A549 (cell line): ENCODE measurements at regions of chr9 and their contacts with region 1.

Region 1: DNA sequence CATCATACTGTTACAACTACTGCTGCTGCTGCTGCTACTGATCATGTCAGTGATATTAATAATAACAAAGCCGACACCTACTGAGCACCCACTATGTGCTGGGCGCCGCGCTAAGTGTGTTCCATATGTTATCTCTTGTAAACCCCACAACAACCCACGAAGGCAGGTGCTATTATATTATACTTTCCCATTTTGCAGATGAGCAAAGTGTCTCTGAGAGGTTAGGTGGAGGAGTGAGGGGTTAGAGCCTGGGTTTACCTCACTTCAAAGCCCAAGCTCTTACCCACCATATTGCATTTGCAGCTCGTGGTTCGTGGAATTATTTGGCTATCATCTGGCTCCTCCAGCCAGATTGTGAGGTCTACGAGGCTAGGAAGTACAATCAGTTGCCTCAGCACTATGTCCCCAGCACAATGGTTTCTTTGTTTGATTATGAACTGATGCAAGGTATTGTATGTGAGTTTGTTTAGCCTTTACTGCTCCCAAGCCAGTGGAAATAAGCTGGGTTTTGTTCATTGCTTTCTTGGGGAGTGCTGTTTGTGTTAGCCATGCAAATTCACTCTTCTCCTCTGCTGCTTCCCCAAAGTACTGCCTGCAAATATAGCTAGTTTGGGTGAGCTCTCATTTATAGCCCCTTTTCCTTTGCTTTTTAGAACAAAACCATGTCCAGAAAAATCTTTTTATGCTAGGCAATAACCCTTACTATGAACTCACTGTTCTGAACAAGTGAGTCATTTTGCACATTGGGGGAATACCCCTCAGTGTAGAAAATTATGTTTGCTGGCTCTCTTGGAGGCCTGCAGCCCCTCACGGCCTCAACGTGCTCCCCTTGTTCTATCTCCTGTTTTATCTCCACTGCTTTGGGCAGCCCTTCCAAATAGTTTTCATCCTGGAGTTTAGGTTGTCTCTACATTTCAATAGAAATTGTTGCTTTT is 47.9 kb downstream of the ALG2 start:
- DNase-seq: no peak
- ATAC-seq: no peak
- H3K4me3 ChIP-seq: no peak overlapping the region
- H3K27ac ChIP-seq: no peak overlapping the region
- H3K4me1 ChIP-seq: no peaks in the 10 kb centered on the region
- CTCF ChIP-seq: no peak
- EP300 ChIP-seq: no peak
- POLR2A ChIP-seq: no peak
- RAD21 ChIP-seq: no peak

Region 2: GRCh38 chr9:99162759-99163364 is 11.0 kb before region 1 on chr9:
- CTCF ChIA-PET with region 1: interaction called, 21 read pairs
- POLR2A ChIA-PET with region 1: no interaction called
- DNase-seq: peak; percentile 14 to 42
- ATAC-seq: peak in 1 of 2 experiments; percentile 42; a peak in 3 of 6 replicates
- H3K4me3 ChIP-seq: no peak overlapping the region
- H3K27ac ChIP-seq: no peak overlapping the region
- H3K4me1 ChIP-seq: peaks cover 7% of the 10 kb centered on the region; the same call in 1 of the 3 replicates
- CTCF ChIP-seq: peak; percentile 84
- EP300 ChIP-seq: no peak
- POLR2A ChIP-seq: no peak
- RAD21 ChIP-seq: peak; percentile 77 to 79